CD8-positive, alpha-beta memory T cell (primary cell): ENCODE measurements at regions of chr1 and their contacts with region 1.

Region 1: DNA sequence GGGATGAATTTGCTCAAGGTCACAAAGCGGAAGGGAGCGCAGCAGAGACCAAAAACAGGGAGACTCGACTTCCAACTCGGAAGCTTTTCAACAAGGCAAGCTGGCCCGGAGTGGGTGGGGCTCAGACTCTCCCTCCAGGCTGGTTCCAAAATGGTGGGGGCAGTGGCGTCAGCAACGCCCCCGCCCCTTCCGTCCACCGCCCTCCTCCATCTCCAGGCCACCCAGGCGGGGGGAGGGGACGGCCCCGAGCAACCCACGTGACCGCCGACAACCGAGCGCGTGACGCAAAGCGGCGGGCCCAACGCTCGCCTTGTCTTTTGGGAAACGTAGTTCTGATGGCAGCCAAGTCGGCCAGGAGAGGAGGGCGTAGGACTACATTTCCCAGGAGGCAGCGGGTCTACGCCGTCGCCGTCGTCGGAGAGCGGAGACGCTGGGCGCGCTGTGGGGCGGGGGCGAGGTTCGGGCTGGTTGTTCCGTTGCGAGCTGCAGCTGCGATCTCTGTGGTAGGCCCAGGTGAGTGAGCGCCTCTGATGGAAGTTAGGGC is at the start of gene THRAP3:
- DNase-seq: peak; percentile 99 to 100 (median 100)
- H3K4me3 ChIP-seq: peak within 1 kb of the TSS; percentile 88
- H3K4me3 Mint-ChIP-seq: peak within 1 kb of the TSS; percentile 89 to 99 (median 96)
- H3K27ac ChIP-seq: peak within 1 kb of the TSS; percentile 96
- H3K27ac Mint-ChIP-seq: peak within 1 kb of the TSS; percentile 97 to 100 (median 100)
- H3K4me1 ChIP-seq: peaks cover 36% of the 10 kb centered on the region
- H3K4me1 Mint-ChIP-seq: peaks cover 28 to 46% (median 36%) of the 10 kb centered on the region in 3 donors
- H3K27me3 ChIP-seq: no peaks in the 10 kb centered on the region
- H3K27me3 Mint-ChIP-seq: peaks cover 0 to 4% of the 10 kb centered on the region in 2 donors
- total RNA-seq, gene THRAP3: 167 to 168 TPM

Region 2: DNA sequence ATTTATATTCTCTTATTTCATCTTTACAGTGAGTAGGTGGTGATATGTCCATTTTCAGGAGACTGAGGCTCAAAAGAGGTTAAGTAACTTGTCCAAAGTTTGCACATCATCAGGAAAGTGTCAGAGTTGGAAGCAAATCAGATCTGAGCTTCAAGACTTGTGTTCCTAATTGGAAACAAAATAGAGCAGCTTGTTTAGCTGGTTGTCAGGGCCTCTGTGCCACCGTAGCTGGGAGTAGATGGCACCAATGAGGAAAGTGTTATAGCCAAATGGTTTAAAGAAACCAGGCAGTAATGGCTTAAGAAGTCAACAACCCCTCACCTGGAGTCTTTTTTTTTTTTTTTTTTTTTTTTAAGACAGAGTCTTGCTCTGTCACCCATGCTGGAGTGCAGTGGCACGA is 321.4 kb before region 1 on chr1:
- CTCF ChIA-PET with region 1: no interaction called
- POLR2A ChIA-PET with region 1: no interaction called
- DNase-seq: no peak
- H3K4me3 ChIP-seq: no peak overlapping the region
- H3K4me3 Mint-ChIP-seq: no peak overlapping the region
- H3K27ac ChIP-seq: no peak overlapping the region
- H3K27ac Mint-ChIP-seq: no peak overlapping the region
- H3K4me1 ChIP-seq: no peaks in the 10 kb centered on the region
- H3K4me1 Mint-ChIP-seq: no peaks in the 10 kb centered on the region
- H3K27me3 ChIP-seq: no peaks in the 10 kb centered on the region
- H3K27me3 Mint-ChIP-seq: no peaks in the 10 kb centered on the region

Region 3: DNA sequence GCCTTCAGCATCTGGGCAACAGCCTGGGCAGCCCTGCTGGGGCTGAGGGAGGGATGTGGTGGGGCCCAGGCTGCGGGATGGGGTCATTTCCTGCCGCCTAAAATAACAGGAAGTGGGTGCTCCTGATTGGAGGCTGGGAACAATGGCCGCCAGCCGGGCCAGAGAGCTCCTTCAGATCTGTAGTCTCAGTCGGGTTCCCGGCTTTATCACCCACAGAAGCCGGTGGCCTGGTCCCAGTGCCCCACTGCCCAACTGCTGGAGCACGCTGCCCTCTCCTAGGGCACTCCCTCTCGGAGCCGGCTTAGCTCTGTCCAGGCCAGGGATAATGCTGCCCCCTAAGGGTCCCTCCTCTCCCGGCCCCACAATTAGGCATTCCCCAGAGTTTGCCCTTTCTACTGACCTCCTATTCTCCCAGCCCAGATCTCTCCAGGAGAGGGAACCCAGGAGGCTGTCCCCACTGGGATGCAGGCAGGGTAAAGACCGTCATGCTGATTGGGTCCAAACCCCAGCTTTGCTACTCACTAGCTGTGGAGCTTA is 63.0 kb before region 1 on chr1:
- CTCF ChIA-PET with region 1: interaction called, 3 read pairs
- POLR2A ChIA-PET with region 1: interaction called, 19 read pairs
- DNase-seq: peak; percentile 45 to 77 (median 66)
- H3K4me3 ChIP-seq: peak overlapping the region; percentile 78
- H3K4me3 Mint-ChIP-seq: peak overlapping the region; percentile 81 to 90 (median 85)
- H3K27ac ChIP-seq: peak overlapping the region; percentile 87
- H3K27ac Mint-ChIP-seq: peak overlapping the region; percentile 90 to 99 (median 95)
- H3K4me1 ChIP-seq: peaks cover 75% of the 10 kb centered on the region
- H3K4me1 Mint-ChIP-seq: peaks cover 74 to 79% (median 78%) of the 10 kb centered on the region in 3 donors
- H3K27me3 ChIP-seq: no peaks in the 10 kb centered on the region
- H3K27me3 Mint-ChIP-seq: no peaks in the 10 kb centered on the region

Region 4: DNA sequence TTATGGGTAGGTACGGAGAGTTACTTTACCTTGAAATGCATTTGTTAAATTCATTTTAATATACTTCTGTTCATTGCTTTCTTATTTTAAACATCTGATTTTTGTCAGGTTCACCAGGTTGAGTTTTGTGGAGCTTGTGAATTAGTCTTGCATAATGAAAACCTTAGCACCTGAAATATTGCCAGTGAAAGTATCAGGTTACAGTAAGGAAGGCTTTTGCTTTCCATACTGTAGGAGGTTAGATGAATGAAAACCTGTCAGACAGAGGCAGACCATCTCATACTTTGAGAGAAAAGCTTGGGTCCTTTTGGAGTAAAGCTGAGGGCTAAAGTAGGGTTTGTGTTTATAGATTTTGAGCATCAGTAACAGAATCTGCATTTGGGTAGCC is 34.9 kb after region 1 on chr1:
- CTCF ChIA-PET with region 1: no interaction called
- POLR2A ChIA-PET with region 1: no interaction called
- DNase-seq: no peak
- H3K4me3 ChIP-seq: no peak overlapping the region
- H3K4me3 Mint-ChIP-seq: no peak overlapping the region
- H3K27ac ChIP-seq: no peak overlapping the region
- H3K27ac Mint-ChIP-seq: peak overlapping the region in 2 of 8 donors; percentile 23 to 51
- H3K4me1 ChIP-seq: peaks cover 6% of the 10 kb centered on the region
- H3K4me1 Mint-ChIP-seq: peaks cover 36 to 64% (median 39%) of the 10 kb centered on the region in 3 donors
- H3K27me3 ChIP-seq: no peaks in the 10 kb centered on the region
- H3K27me3 Mint-ChIP-seq: no peaks in the 10 kb centered on the region

Region 5: GRCh38 chr1:36285448-36286101 is 61.5 kb after region 1 on chr1:
- CTCF ChIA-PET with region 1: interaction called, 12 read pairs
- POLR2A ChIA-PET with region 1: interaction called, 4 read pairs
- DNase-seq: peak; percentile 49 to 76 (median 61)
- H3K4me3 ChIP-seq: no peak overlapping the region
- H3K4me3 Mint-ChIP-seq: no peak overlapping the region
- H3K27ac ChIP-seq: no peak overlapping the region
- H3K27ac Mint-ChIP-seq: peak overlapping the region in 7 of 8 donors; percentile 30 to 87 (median 72)
- H3K4me1 ChIP-seq: peaks cover 5% of the 10 kb centered on the region
- H3K4me1 Mint-ChIP-seq: peaks cover 14 to 24% (median 15%) of the 10 kb centered on the region in 3 donors
- H3K27me3 ChIP-seq: no peaks in the 10 kb centered on the region
- H3K27me3 Mint-ChIP-seq: no peaks in the 10 kb centered on the region